ENCODE measurements at regions of chr20 and their contacts with region 1.

Region 1: DNA sequence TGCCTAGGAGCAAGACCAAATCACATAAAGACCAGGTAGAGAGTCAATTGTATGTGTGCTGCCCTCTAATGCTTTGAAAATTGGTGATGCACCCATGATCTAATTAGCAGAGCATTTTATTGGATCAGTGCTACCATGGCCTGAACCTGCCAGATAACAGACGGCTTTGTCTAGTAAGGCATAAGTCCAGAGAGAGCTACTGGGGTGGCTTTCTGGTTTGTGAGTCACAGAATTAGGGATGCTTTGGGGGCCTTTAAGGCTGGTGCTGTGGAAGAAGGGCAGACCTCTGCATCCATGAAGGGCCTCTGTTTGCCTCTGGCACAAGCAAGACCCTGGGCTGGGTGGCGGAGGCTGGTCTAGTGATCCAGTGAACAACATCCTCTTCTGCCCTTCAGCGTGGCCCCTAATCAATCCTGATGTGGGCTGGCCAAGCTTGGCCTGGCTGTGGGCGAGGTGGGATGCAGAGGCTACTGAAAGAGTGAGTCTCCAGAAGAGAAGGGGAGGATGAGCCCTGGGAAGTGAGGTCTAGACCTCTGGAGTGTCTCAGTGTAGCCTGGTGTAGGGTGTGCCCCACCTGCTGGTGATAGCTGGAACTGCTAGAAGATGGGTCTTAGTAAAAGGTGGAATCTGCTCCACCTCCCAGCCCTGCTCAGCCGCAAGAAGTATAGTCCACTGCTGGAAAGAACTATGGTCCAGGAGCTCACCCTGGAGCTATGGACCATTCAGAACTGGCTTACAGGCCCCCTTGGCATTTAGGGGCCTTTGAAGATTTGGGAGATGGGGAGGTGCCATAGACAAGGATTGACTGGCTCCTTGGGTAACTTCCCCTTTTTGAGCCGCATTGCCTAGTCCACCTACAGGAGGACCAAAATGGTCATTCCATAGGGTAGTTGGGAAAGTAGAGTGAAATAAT is 36.7 kb upstream of the AAR2 start:
- DNase-seq: peak; percentile 53 to 79 (median 74)
- ATAC-seq: peak; percentile 82
- H3K4me3 ChIP-seq: no peak overlapping the region
- H3K4me3 Mint-ChIP-seq: no peak overlapping the region
- H3K27ac ChIP-seq: no peak overlapping the region
- H3K27ac Mint-ChIP-seq: no peak overlapping the region
- H3K4me1 ChIP-seq: no peaks in the 10 kb centered on the region
- H3K4me1 Mint-ChIP-seq: peaks cover 8% of the 10 kb centered on the region
- H3K27me3 ChIP-seq: no peaks in the 10 kb centered on the region
- H3K27me3 Mint-ChIP-seq: peaks cover 7% of the 10 kb centered on the region
- CTCF ChIP-seq: peak; percentile 82

Region 2: GRCh38 chr20:36155991-36156390 is 43.6 kb before region 1 on chr20:
- CTCF ChIA-PET with region 1: interaction called, 6 read pairs
- POLR2A ChIA-PET with region 1: no interaction called
- intact Hi-C with region 1: loop called (anchors 1 kb)
- DNase-seq: no peak
- ATAC-seq: no peak
- H3K4me3 ChIP-seq: no peak overlapping the region
- H3K4me3 Mint-ChIP-seq: no peak overlapping the region
- H3K27ac ChIP-seq: no peak overlapping the region
- H3K27ac Mint-ChIP-seq: no peak overlapping the region
- H3K4me1 ChIP-seq: no peaks in the 10 kb centered on the region
- H3K4me1 Mint-ChIP-seq: peaks cover 4% of the 10 kb centered on the region
- H3K27me3 ChIP-seq: peaks cover 0 to 11% of the 10 kb centered on the region in 2 experiments
- H3K27me3 Mint-ChIP-seq: peaks cover 21% of the 10 kb centered on the region
- CTCF ChIP-seq: no peak

Region 3: GRCh38 chr20:36183155-36183944 is 16.3 kb before region 1 on chr20:
- CTCF ChIA-PET with region 1: interaction called, 15 read pairs
- POLR2A ChIA-PET with region 1: no interaction called
- intact Hi-C with region 1: no loop called
- DNase-seq: no peak
- ATAC-seq: no peak
- H3K4me3 ChIP-seq: no peak overlapping the region
- H3K4me3 Mint-ChIP-seq: no peak overlapping the region
- H3K27ac ChIP-seq: no peak overlapping the region
- H3K27ac Mint-ChIP-seq: no peak overlapping the region
- H3K4me1 ChIP-seq: no peaks in the 10 kb centered on the region
- H3K4me1 Mint-ChIP-seq: no peaks in the 10 kb centered on the region
- H3K27me3 ChIP-seq: no peaks in the 10 kb centered on the region
- H3K27me3 Mint-ChIP-seq: no peaks in the 10 kb centered on the region
- CTCF ChIP-seq: no peak

Region 4: DNA sequence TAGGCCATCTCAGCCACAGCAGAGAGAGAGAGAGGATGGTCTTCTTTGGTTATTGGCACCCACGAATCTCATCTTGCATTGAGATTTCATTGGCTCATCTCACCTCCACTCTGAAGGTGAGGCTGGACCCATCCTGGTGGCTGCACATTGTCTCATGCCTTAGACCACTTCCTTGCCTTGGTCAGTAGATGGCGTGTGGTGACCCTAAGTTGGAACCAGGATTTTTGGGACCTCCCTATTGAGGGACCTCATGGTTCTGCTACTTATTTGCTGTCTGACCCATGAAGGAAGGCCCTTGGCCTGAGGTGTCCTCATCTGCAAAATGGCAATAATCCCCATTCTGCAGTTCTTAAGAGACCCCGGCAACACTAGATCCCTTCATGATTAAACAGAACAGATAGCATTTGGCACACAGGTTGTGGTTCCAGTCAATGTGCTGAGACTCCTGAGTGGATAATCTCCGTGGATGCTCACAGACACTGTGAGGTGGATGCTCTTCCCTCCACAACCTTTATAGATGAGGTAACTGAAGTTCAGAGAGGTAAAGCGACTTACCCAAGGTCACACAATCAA is 15.2 kb after region 1 on chr20:
- CTCF ChIA-PET with region 1: interaction called, 30 read pairs
- POLR2A ChIA-PET with region 1: no interaction called
- intact Hi-C with region 1: no loop called
- DNase-seq: peak in 2 of 9 experiments; percentile 27 to 45
- ATAC-seq: no peak
- H3K4me3 ChIP-seq: no peak overlapping the region
- H3K4me3 Mint-ChIP-seq: no peak overlapping the region
- H3K27ac ChIP-seq: no peak overlapping the region
- H3K27ac Mint-ChIP-seq: no peak overlapping the region
- H3K4me1 ChIP-seq: no peaks in the 10 kb centered on the region
- H3K4me1 Mint-ChIP-seq: no peaks in the 10 kb centered on the region
- H3K27me3 ChIP-seq: no peaks in the 10 kb centered on the region
- H3K27me3 Mint-ChIP-seq: peaks cover 2% of the 10 kb centered on the region
- CTCF ChIP-seq: no peak

Region 5: DNA sequence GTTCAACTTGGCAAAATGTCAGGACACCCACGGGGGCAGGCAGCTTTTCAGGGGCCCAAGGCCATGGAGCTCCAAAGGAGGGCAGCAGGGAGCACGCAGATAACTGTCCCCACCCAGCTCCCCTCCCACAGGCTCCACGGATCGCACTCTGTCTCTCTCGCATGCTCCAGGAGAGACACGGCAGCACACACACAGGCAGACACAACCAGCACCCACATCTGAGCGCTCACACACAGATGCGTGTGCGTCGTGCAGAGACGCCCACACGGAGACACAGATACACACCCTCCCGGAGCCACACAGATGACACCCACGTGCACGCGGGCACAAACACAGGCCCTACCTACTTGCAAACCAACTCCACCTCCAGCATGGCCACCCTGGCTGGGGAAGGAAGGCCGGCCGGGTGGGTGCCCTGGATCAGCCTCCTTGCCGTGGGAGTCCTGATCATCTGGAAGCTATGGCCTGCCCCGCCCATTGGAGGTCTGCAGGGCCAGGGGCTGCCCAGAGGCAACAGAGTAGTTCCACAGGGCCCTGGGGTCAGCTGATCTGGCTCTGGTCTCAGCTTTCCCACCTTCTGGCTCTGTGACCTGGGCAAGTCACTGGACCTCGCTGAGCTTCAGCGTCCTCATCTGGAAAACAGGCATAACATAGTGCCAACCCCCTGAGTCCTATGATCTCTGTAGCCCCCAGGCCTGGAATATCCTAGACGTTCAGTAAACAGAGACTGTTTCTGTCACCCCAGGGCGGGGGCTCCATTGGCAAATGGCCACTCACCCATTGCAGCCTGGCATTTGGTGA is 68.2 kb after region 1 on chr20:
- CTCF ChIA-PET with region 1: no interaction called
- POLR2A ChIA-PET with region 1: no interaction called
- intact Hi-C with region 1: no loop called
- DNase-seq: no peak
- ATAC-seq: no peak
- H3K4me3 ChIP-seq: no peak overlapping the region
- H3K4me3 Mint-ChIP-seq: no peak overlapping the region
- H3K27ac ChIP-seq: no peak overlapping the region
- H3K27ac Mint-ChIP-seq: no peak overlapping the region
- H3K4me1 ChIP-seq: no peaks in the 10 kb centered on the region
- H3K4me1 Mint-ChIP-seq: no peaks in the 10 kb centered on the region
- H3K27me3 ChIP-seq: no peaks in the 10 kb centered on the region
- H3K27me3 Mint-ChIP-seq: no peaks in the 10 kb centered on the region
- CTCF ChIP-seq: no peak

Region 6: GRCh38 chr20:36439040-36439730 is 239.6 kb after region 1 on chr20:
- CTCF ChIA-PET with region 1: interaction called, 37 read pairs
- POLR2A ChIA-PET with region 1: no interaction called
- intact Hi-C with region 1: loop called in 1 of 2 experiments (anchors 1 kb)
- DNase-seq: peak; percentile 29 to 78 (median 65)
- ATAC-seq: peak; percentile 49
- H3K4me3 ChIP-seq: no peak overlapping the region
- H3K4me3 Mint-ChIP-seq: no peak overlapping the region
- H3K27ac ChIP-seq: no peak overlapping the region
- H3K27ac Mint-ChIP-seq: no peak overlapping the region
- H3K4me1 ChIP-seq: no peaks in the 10 kb centered on the region
- H3K4me1 Mint-ChIP-seq: peaks cover 2% of the 10 kb centered on the region
- H3K27me3 ChIP-seq: no peaks in the 10 kb centered on the region
- H3K27me3 Mint-ChIP-seq: peaks cover 6% of the 10 kb centered on the region
- CTCF ChIP-seq: peak; percentile 81